ENCODE measurements at regions of chr16 and their contacts with region 1.

Region 1: DNA sequence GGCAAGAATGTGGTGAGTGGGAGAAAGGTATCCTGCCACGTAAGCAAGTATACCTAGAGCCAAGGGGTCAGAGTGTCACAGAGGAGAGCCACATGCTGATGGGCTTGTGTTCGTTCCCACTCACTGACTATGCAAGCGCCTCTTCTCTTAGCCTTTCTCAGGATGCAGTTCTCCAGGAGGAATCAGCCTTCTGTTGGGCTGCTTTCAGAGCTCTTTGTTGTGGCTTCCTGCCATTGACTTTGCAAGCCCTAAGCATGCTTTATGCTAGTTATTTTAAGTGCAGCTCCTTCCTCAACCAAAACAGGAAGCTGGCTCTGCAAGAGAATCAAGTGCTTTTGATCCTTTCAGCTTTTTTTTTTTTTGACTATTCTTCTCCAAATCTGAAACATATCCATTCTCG is 66.6 kb downstream of the SIAH1 start:
- DNase-seq: no peak
- ATAC-seq: no peak
- H3K4me3 ChIP-seq: no peak overlapping the region
- H3K27ac ChIP-seq: no peak overlapping the region
- H3K4me1 ChIP-seq: peaks cover 5% of the 10 kb centered on the region
- H3K27me3 ChIP-seq: no peaks in the 10 kb centered on the region
- CTCF ChIP-seq: no peak

Region 2: GRCh38 chr16:48231727-48232492 is 86.7 kb before region 1 on chr16:
- CTCF ChIA-PET with region 1: no interaction called
- POLR2A ChIA-PET with region 1: no interaction called
- intact Hi-C with region 1: loop called (anchors 5 kb)
- DNase-seq: peak; percentile 20
- ATAC-seq: peak; percentile 72
- H3K4me3 ChIP-seq: peak overlapping the region; percentile 19; the same call in 1 of the 2 replicates
- H3K27ac ChIP-seq: peak overlapping the region; percentile 53
- H3K4me1 ChIP-seq: peaks cover 7% of the 10 kb centered on the region; the same call in 1 of the 2 replicates
- H3K27me3 ChIP-seq: no peaks in the 10 kb centered on the region
- CTCF ChIP-seq: peak; percentile 52